ENCODE measurements at regions of chr2 and their contacts with region 1.

Region 1: DNA sequence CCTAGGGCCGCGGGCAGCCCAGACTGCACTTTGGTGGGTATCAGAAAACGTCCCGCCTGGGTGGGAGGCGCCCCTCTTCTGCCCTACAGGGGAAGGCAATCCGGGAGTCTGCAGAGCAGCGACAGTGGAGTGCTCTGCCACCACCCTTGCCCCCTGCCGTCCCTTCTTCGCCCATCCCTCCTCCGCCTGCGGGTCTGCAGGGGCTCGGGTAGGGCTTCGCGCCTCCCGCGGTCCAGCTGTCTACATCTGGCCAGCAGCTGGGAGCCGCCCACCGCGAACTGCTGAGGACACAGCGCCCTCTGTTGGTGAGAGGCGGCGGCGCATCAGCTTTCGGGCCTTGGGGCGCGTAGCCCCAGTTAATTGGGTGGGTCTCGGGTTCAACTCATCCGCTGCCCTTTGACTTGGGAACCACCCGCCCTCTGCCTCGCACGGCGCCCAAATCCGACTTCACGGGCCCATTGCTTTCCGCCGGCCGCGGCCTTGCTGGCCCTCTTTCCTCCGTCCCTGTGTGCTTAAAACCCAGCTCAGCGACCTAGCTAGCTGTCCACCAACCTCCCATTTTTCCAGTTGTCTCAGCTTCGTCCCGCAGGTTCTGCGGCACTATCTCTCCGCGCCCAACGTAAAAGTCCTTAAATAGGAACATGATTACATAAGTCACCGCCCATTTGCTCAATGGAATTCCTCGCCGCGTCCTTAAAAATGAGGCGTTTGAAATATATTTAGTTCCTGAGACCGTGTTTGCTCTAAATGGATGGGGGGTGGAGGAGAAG is 17.6 kb downstream of the WNT10A start:
- DNase-seq: peak in 41 of 42 donors; percentile 46 to 91 (median 74)

Region 2: DNA sequence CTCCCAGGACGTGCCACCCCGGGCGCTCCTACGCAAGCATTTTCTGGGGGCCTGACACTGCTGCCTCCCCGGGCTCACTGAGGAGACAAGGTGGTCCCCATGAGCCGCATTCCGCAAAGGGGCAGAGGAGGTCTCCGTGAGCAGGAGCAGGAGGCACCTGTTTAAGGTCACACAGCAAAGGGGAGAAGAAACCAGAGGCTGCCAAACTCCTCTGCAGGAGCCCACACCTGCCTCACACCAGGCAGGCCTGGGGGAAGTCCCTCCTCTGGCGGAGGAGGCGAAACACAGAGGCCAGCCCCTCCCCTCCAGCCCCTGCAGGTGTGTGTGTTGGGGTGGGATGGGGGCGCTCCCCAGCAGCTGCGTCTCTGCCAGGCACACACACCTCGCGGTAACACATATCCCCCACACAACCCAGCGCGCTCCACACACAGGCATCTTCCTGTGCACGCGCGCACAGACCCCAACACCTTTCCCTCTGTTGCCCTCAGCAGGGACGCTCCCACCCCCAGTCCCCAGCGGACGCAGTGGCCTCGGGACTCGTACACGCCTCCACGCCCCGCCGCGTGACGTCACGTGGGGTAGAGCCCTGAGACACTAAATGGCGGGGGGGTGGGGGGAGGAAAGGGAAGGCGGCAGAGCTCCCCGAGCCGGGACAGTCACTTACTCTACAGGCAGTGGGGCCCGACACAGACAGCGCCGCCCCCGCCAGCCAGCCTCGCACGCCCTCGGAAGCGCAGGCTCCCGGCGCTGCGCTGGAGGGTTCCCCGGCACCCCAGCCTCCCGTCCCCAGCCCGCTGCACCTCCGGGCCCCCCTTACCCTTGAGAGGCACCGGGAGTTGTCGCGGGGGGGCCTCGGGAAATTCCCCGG is 18.2 kb before region 1 on chr2:
- intact Hi-C with region 1: loop called (anchors 1 kb)
- DNase-seq: peak in 21 of 42 donors; percentile 34 to 74 (median 58)

Region 3: GRCh38 chr2:218959141-218959731 is 60.9 kb after region 1 on chr2 and contains the start of gene CDK5R2:
- intact Hi-C with region 1: loop called (anchors 5 kb)
- DNase-seq: peak; percentile 75 to 96 (median 90)

Measured in head of caudate nucleus (tissue), 42 donors.